Activated T-helper 1 cell treated with anti-CD3 and anti-CD28 coated beads, Interleukin-12 subunit alpha, Interleukin-12 subunit beta, Interleukin-2, Interleukin-4 antibody, amounts not matched to agents 30 ng/mL and 10 ng/mL and 1 ng/mL, durations not matched to agents 14 hours and 24 hours and 36 hours (primary cell): ENCODE measurements at regions of chr14 and their contacts with region 1.

Region 1: DNA sequence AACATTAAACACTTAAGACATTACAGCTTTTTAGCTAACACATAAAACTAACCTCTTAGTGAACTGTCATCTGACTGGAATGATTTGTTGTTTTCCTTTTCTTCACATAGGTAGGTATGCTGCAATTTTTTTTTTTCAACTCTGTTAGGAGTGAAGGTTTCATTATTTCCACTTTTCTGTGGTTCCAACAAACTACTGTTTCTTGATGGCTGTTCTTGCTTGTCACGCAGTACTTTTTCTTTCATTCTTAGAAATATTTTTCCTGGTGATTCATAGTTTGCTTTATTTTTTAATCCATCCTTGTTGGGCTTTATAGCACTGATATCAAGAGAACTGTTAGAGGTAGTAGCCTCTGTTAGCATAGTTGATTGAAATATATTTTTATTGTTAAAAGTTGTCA is 6.3 kb downstream of the MIS18BP1 start:
- DNase-seq: no peak
- H3K4me3 Mint-ChIP-seq: no peak overlapping the region
- H3K27ac Mint-ChIP-seq: no peak overlapping the region
- H3K4me1 Mint-ChIP-seq: peaks cover 19% of the 10 kb centered on the region
- H3K27me3 Mint-ChIP-seq: no peaks in the 10 kb centered on the region

Region 2: DNA sequence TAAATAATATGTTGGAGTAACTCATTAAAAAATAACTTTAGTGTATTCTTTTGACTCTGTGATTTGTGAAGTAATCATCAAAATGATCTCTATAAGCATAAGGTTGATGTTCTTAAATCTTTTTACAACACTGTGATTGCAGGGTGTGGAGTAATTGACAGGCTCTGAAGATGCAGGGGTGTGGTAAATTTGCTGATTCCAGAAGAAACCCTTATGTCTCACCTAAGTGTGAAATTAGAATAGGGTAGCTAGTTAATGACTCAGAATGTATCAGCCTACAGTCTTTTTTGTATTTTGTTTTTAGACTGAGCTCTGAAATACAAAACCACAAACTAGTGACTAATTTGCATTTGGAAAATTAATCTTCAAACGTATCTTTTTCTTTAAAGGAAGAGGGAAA is 156.9 kb before region 1 on chr14:
- intact Hi-C with region 1: loop called (anchors 1 kb)
- DNase-seq: no peak
- H3K4me3 Mint-ChIP-seq: peak overlapping the region; percentile 6
- H3K27ac Mint-ChIP-seq: peak overlapping the region; percentile 38
- H3K4me1 Mint-ChIP-seq: peaks cover 71% of the 10 kb centered on the region
- H3K27me3 Mint-ChIP-seq: no peaks in the 10 kb centered on the region

Region 3: GRCh38 chr14:45194964-45195363 is 51.7 kb before region 1 on chr14:
- intact Hi-C with region 1: loop called (anchors 1 kb)
- DNase-seq: no peak
- H3K4me3 Mint-ChIP-seq: no peak overlapping the region
- H3K27ac Mint-ChIP-seq: peak overlapping the region; percentile 34
- H3K4me1 Mint-ChIP-seq: peaks cover 11% of the 10 kb centered on the region
- H3K27me3 Mint-ChIP-seq: no peaks in the 10 kb centered on the region

Region 4: DNA sequence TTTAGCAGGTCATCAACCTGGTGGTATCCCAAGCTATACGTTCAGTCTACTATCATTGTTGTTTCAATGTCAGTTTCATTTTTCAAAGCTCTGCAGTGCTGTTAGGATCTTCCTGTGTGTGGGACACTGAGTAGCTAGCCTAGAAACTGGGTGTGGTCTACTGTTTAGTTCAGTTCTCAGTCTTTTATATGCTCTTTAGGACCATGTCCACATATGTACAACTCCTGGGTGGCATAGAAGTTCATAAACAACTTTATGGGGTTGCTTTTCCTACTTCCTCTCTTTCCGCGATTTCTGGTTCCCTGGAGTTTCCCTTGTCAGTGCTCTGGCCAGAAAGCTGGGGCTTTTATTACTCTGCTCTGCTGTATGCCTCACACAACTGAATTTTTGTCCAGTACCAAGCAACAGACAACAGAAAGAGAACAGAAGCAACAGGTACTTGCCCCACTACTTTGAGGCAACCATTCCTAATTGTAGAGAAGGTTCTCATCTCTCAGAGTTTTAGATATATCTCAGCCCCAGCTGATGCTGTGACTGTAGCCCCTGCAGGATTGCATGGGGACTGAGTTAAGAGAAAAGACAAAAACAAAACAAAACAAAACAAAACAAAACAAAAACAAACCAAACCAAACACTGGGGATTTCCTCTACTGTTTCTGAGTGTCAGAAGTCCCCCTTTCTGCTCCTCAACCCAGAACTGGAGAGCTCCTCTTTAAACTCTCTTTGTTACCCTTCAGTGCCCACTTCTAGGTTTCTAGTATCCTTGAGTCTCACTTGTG is 24.0 kb before region 1 on chr14:
- intact Hi-C with region 1: loop called (anchors 1 kb)
- DNase-seq: no peak
- H3K4me3 Mint-ChIP-seq: peak overlapping the region; percentile 28
- H3K27ac Mint-ChIP-seq: peak overlapping the region; percentile 78
- H3K4me1 Mint-ChIP-seq: peaks cover 41% of the 10 kb centered on the region
- H3K27me3 Mint-ChIP-seq: no peaks in the 10 kb centered on the region

Region 5: DNA sequence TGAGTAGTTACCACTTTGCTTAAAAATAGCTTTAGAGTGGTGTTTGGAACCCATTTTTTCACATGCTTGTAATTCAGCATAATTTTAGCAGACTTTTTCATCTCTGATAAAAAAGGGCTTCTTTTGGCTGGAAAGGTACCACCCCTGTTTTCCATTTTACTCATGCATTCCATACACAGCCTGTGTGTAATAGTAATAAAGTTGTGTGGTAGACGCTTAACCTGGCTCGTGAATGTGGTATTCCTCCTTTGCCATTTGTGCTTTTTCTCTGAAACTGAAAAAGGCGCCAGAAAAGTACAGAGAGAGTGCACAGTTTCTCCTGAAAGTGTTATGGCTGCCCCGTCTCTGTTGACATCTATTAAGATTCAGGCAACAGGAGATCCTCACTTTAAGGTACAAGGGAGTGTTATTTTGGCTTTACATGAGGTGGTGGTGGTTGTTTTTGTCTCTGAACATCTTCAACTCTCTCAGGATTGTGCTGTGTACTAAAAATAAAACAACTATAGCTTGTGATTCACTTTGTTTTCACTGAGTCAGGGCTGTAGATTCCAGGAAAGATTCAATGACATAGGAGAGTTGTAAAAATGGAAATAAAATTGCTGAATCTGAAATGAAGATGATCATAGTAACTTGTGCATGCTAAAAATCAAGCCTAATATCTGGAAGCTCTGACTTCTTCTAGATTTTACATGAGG is 51.9 kb after region 1 on chr14:
- intact Hi-C with region 1: no loop called
- DNase-seq: no peak
- H3K4me3 Mint-ChIP-seq: no peak overlapping the region
- H3K27ac Mint-ChIP-seq: peak overlapping the region; percentile 24
- H3K4me1 Mint-ChIP-seq: no peaks in the 10 kb centered on the region
- H3K27me3 Mint-ChIP-seq: no peaks in the 10 kb centered on the region

Region 6: DNA sequence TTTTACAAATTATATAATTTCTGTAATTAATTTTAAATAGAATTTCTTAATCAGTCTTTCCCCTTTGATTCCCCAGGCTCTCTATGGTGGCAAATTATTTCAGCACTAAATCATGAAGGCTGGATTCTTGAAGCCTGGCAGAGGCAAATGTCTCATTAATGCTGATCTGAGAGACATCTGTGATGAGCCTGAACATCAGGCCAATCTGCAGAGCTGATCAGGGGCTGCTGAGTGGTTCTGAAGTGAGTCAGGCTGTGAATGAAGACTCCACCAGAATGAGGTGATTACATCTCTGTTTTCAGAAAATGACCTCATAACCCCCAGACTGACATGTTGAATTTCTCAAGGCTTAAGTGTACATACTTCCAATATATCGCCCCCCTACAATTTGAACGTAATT is 130.5 kb after region 1 on chr14:
- intact Hi-C with region 1: no loop called
- DNase-seq: no peak
- H3K4me3 Mint-ChIP-seq: no peak overlapping the region
- H3K27ac Mint-ChIP-seq: no peak overlapping the region
- H3K4me1 Mint-ChIP-seq: no peaks in the 10 kb centered on the region
- H3K27me3 Mint-ChIP-seq: no peaks in the 10 kb centered on the region